ENCODE measurements at regions of chr3 and their contacts with region 1.

Region 1: DNA sequence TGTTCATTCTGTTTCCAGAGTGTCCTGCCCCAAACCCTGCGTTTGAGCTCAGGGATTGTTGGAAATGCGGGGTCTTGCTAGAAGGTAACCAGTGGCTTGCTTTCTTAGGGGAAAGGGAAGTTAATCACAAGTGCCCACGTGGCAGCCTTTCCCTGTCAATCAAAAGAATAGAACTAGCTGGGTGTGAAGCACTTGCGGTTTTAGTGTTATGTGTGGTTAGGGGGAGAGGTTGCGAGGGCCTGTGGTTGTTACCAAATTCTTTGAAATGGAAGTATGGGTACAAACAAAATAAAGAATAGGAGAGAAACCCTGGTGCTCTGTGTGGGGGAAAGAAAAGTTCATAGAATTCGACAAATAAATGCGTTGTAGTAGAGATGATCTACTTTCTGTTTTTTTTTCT is 67.6 kb downstream of the FNDC3B start:
- DNase-seq: peak; percentile 79
- H3K4me3 Mint-ChIP-seq: peak overlapping the region; percentile 52
- H3K27ac Mint-ChIP-seq: peak overlapping the region; percentile 84
- H3K4me1 Mint-ChIP-seq: peaks cover 72% of the 10 kb centered on the region
- H3K27me3 Mint-ChIP-seq: no peaks in the 10 kb centered on the region

Region 2: DNA sequence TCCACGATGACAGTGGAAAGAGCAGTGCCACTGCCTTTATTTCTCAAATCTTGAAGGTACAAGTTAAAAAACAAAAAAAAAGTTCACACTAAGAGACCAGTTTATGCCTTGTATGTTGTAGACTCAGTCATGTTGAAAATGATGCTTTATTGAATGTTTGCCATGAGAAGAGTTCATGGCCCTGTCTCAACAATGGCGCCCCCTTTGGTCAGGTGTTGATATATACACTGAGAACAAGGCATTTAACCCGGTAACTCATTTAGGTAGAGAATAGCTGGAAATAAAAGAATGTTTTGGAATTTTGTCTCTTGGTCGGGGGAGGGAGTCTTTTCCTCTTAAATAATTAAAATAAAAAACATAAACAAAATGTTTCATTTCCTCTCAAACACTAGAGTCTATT is 934.9 kb before region 1 on chr3:
- CTCF ChIA-PET with region 1: no interaction called
- intact Hi-C with region 1: loop called (anchors 10 kb)
- DNase-seq: peak; percentile 49
- H3K4me3 Mint-ChIP-seq: no peak overlapping the region
- H3K27ac Mint-ChIP-seq: no peak overlapping the region
- H3K4me1 Mint-ChIP-seq: peaks cover 10% of the 10 kb centered on the region
- H3K27me3 Mint-ChIP-seq: no peaks in the 10 kb centered on the region

Region 3: DNA sequence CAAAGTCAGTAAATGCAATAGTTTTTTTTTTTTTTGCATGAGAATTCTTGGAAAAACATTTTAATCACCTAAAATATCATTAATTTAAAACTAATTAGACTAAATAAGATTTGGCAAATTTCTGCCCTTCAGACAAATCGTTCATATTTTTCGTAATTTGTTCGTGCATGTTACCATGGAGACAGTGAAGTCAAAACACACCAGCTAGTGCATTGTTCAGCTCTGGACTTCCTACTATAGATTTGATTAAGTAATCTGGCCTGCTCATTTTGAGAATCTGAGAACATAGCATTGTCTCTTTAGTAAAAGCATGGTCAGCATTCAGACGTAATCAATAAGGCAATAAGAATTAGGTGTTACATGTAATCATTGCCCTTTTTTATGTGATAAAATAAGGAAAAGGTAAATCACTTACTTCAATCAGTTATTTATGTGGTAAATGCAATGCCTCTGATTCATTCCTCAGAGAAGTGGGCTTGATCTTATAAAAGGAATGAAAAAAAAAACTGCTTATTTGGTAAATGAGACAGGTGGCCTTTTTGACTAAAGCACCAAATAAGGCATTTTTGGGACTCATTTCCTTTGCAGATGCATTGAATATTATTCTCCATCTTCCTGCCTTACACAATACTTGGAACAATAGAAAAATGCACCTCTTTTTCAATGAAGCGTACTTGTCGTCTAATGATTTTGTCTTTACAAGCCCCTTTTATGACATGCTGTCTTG is 152.2 kb before region 1 on chr3:
- CTCF ChIA-PET with region 1: no interaction called
- intact Hi-C with region 1: no loop called
- DNase-seq: no peak
- H3K4me3 Mint-ChIP-seq: no peak overlapping the region
- H3K27ac Mint-ChIP-seq: no peak overlapping the region
- H3K4me1 Mint-ChIP-seq: no peaks in the 10 kb centered on the region
- H3K27me3 Mint-ChIP-seq: no peaks in the 10 kb centered on the region

Region 4: DNA sequence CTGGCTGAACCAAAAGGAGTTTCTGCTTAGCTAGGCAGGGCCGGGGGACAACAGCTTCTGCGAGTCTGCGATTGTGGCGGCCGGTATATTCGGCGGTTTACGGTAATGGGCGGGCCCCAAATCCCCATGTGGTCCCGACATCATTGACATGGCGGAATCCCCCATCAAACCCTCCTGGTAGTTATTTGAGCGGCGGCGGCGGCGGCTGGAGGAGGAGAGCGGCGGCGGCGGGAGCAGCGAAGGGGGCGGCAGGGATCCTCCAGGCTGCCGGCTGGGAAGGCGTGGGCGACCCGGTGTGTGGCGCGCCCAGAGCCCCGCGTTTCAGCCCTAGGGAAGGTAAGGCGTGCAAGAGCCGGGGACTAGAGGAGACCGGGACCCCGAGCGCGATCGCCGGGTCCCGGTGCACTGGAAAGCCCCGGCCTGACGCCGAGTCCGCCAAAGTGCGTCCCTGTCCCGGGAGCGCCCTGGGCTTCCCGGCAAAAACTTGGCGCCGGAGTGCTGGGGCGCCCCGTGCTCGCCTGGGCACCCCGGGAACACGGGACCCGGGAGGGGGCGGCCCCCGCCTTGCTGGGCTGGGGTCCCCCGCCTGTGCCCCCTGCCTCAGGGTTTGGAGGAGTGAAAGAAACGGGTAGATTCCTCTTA is 67.4 kb before region 1 on chr3 and contains the start of gene FNDC3B:
- CTCF ChIA-PET with region 1: interaction called, 4 read pairs
- intact Hi-C with region 1: loop called (anchors 1 kb)
- DNase-seq: peak; percentile 96
- H3K4me3 Mint-ChIP-seq: peak within 1 kb of the TSS; percentile 91
- H3K27ac Mint-ChIP-seq: peak within 1 kb of the TSS; percentile 89
- H3K4me1 Mint-ChIP-seq: peaks cover 21% of the 10 kb centered on the region
- H3K27me3 Mint-ChIP-seq: no peaks in the 10 kb centered on the region
- total RNA-seq, gene FNDC3B: 9.2 to 13.5 TPM

Region 5: DNA sequence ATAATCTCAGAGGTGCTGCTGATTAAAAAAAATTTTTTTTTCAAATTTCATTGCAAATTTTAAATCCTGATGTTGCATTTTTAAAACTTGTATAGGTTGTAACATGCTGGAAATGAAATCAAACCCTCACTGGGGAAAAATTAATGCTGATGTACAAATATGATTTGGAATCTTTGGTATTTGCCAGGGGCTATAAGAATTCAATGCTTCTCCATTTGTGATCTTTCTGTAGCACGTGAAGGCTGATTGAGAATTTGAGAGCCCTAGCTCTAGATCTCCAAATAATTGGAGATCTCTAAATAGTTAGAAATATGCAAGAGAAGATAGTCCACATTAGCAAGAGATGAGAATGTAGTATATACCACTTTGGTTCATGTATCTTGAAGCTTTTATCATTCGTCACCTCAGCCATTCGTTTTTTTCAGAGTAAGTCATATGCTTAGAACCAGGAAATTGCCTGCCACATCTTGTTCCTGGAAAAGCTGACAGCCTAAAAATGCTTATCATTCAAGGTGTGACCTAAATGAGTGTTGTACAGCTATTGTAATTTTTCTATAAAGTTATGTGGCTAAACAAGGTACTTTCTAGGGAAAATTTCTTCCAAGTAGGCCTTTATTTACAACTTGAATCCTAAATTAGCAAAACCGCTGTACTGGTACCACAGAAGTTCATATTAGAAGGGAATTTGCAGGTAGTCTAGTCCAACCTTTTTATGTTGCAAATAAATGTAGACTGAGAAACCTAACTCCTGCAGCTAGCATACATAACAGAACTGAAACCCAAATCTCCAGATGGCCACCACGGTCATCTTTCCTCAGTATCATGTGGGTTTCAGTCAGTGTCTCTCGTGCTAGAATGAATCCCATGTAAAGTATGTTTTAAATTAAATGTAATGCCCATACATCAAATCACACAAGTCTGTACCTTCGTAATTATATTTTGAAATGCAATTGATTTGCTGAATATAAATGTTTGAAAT is 19.1 kb before region 1 on chr3:
- CTCF ChIA-PET with region 1: interaction called, 6 read pairs
- intact Hi-C with region 1: loop called (anchors 1 kb)
- DNase-seq: peak; percentile 30
- H3K4me3 Mint-ChIP-seq: no peak overlapping the region
- H3K27ac Mint-ChIP-seq: no peak overlapping the region
- H3K4me1 Mint-ChIP-seq: peaks cover 34% of the 10 kb centered on the region
- H3K27me3 Mint-ChIP-seq: no peaks in the 10 kb centered on the region

Region 6: GRCh38 chr3:172153335-172153861 is 46.4 kb after region 1 on chr3:
- CTCF ChIA-PET with region 1: no interaction called
- intact Hi-C with region 1: no loop called
- DNase-seq: peak; percentile 72
- H3K4me3 Mint-ChIP-seq: peak overlapping the region; percentile 13
- H3K27ac Mint-ChIP-seq: no peak overlapping the region
- H3K4me1 Mint-ChIP-seq: peaks cover 31% of the 10 kb centered on the region
- H3K27me3 Mint-ChIP-seq: no peaks in the 10 kb centered on the region

Region 7: DNA sequence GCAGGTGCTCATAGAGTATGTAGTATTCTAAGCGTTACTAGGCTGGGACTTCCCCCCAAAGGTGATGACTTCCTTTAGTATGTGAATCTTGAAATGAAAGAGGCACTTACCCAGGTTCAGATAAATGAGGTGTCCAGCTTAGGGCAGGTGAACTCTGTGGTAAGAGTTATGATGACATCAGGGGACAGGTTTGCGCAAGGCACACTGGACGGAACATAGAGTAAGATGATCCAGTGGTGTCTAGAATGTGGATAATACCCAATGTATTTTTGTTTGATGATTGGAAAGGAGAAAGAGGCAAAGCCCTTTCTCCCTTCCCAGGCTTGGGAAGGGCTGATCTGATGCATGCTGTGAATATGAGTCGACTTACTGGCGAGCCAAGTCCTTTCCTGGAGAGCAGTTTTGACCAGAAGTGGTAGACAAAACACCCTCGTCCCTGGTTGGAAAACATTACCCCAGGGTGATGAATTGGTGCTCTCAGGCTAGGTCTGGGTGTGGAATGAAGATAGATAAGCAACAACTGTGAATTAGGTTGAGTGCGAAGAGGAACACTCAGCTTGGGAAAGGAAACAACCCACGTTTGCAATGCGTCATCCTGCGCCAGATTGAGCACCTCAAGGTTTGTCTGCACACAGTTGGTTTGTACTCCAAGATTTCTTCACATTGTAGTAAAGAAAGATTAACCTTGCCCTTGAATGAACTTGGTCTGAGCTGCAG is 217.1 kb after region 1 on chr3:
- CTCF ChIA-PET with region 1: no interaction called
- intact Hi-C with region 1: loop called (anchors 2 kb)
- DNase-seq: peak; percentile 48
- H3K4me3 Mint-ChIP-seq: no peak overlapping the region
- H3K27ac Mint-ChIP-seq: peak overlapping the region; percentile 73
- H3K4me1 Mint-ChIP-seq: peaks cover 11% of the 10 kb centered on the region
- H3K27me3 Mint-ChIP-seq: no peaks in the 10 kb centered on the region

Region 8: GRCh38 chr3:172616031-172616461 is 509.1 kb after region 1 on chr3:
- CTCF ChIA-PET with region 1: no interaction called
- intact Hi-C with region 1: loop called (anchors 1 kb)
- DNase-seq: no peak
- H3K4me3 Mint-ChIP-seq: no peak overlapping the region
- H3K27ac Mint-ChIP-seq: no peak overlapping the region
- H3K4me1 Mint-ChIP-seq: peaks cover 18% of the 10 kb centered on the region
- H3K27me3 Mint-ChIP-seq: no peaks in the 10 kb centered on the region